HEK293T (cell line): ENCODE measurements at regions of chr6 and their contacts with region 1.

Region 1: GRCh38 chr6:41027799-41028628 is 11.0 kb downstream of the UNC5CL start:
- DNase-seq: peak; percentile 86

Region 2: DNA sequence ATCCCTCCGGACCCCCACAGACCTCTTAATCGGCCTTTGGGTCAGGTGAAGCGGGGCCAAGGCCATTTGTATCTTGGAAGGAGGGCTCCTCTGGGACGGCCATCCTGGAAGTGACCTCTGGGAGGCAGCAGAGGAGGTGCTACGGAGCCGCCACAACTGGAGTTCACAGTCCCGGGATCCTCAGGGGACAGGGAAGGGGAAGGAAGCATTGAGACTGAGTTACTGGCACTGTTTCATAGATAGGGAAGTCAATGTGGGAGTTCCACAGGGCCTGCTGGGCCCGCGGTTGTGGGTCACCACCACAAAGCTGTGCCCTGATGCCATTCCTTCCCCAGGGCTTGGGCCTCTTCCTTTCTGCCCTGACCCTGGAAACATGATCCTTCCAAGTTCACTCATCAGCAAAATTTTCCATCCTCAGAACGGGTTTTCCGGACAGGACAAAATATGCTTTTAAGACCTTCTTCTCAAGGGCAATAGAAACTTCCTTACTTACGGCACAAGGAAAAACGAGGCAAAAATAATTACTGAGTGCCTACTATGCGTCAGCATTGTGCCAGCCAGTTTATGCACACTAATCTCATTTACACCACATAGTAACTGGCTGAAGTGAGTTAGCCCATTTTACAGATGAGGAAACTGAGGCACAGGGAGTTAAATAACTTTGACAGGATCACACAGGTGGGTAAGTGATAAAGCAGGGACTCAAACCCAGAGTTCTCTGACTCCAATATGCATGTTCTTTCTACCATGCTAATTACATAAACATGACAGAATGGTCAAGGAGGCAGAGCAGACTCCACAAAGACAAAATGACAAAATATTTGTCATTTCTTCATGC is 132.8 kb before region 1 on chr6:
- CTCF ChIA-PET with region 1: interaction called, 14 read pairs
- POLR2A ChIA-PET with region 1: interaction called, 6 read pairs
- DNase-seq: peak; percentile 77

Region 3: GRCh38 chr6:40999569-40999968 is 28.4 kb before region 1 on chr6:
- CTCF ChIA-PET with region 1: interaction called, 10 read pairs
- POLR2A ChIA-PET with region 1: interaction called, 13 read pairs
- DNase-seq: peak; percentile 66

Region 4: DNA sequence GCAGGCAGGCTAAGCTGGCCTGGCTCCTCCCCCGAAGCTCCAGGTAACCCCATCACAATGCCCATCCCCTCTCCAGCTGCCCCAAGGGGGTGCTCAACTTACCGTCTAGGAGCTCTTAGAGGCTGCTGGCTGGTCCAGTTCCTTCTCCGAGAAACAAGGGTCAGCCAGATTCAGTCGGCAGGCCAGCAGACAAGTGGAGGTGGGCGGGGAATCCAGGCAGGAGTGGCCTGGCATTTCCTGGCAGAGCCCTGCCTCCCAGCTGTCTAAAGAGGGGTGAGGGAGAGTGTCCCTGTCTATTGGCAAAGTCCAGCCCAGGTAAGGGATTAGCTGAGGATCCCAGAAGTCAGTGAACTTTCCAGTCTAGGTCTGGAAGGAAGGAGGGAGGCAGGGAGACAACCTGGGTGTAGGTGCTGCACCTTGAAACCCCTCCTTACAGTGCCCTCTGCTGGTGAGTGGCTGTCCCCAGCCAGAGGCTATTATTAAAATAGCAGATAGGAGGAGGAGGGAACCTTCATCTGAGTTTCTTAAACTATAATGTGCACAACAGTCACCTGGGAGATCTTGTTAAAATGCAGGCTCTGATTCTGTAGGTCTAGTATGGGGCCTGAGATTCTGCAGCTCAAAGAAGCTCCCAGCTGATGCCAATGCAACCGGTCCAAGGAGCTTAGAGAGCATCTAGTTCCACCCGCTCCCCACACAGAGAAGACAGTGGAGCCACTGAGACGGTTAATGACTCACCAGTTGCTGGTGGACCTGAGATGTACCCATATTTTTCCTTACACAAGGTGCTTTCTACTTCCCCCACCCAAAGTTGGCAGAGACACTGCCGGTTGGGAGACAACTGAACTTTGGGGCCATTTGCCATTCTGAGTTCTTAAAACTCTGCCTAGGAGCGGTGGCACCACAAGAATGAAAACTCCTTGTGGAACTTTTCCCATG is 11.3 kb after region 1 on chr6 and contains the start of gene UNC5CL:
- CTCF ChIA-PET with region 1: interaction called, 12 read pairs
- POLR2A ChIA-PET with region 1: interaction called, 4 read pairs
- DNase-seq: peak; percentile 67